ENCODE measurements at regions of chr18 and their contacts with region 1.

Region 1: GRCh38 chr18:77650799-77651385 is 401.2 kb downstream of the GALR1 start:
- DNase-seq: peak; percentile 45 to 97 (median 82)

Region 2: DNA sequence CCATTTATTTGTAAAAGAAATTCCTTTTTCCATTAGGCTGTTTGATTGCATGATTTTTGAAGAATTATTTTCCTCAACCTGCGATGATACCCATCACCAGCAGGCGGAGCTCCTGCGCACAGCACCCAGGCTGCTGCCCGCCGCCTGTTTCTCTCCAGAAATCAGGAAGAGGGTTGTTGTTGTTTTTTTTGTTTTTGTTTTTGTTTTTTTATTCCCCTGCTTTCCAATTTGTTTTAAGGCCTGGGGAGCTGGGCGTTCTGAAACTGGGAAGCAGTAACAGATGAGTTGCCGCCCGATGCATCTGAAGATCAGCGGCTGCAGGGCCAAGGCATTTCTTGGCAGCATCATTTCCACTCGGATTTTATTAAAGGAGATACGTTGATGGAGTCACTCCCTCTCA is 650.4 kb before region 1 on chr18:
- intact Hi-C with region 1: loop called (anchors 2 kb)
- DNase-seq: peak in 6 of 10 donors; percentile 61 to 95 (median 76)

Region 3: GRCh38 chr18:77067291-77068061 is 583.4 kb before region 1 on chr18:
- intact Hi-C with region 1: loop called (anchors 5 kb)
- DNase-seq: peak in 4 of 10 donors; percentile 62 to 94 (median 82)